Activated CD8-positive, alpha-beta memory T cell treated with anti-CD3 and anti-CD28 coated beads, Interleukin-2, amount 10 ng/mL, durations not matched to agents 7 days and 5 days (primary cell): ENCODE measurements at regions of chr2 and their contacts with region 1.

Region 1: GRCh38 chr2:9984217-9984739 is 32.8 kb downstream of the GRHL1 start:
- DNase-seq: no peak
- ATAC-seq: peak; percentile 78
- H3K4me3 Mint-ChIP-seq: no peak overlapping the region
- H3K27ac Mint-ChIP-seq: no peak overlapping the region
- H3K4me1 Mint-ChIP-seq: peaks cover 13% of the 10 kb centered on the region
- H3K27me3 Mint-ChIP-seq: peaks cover 28% of the 10 kb centered on the region

Region 2: DNA sequence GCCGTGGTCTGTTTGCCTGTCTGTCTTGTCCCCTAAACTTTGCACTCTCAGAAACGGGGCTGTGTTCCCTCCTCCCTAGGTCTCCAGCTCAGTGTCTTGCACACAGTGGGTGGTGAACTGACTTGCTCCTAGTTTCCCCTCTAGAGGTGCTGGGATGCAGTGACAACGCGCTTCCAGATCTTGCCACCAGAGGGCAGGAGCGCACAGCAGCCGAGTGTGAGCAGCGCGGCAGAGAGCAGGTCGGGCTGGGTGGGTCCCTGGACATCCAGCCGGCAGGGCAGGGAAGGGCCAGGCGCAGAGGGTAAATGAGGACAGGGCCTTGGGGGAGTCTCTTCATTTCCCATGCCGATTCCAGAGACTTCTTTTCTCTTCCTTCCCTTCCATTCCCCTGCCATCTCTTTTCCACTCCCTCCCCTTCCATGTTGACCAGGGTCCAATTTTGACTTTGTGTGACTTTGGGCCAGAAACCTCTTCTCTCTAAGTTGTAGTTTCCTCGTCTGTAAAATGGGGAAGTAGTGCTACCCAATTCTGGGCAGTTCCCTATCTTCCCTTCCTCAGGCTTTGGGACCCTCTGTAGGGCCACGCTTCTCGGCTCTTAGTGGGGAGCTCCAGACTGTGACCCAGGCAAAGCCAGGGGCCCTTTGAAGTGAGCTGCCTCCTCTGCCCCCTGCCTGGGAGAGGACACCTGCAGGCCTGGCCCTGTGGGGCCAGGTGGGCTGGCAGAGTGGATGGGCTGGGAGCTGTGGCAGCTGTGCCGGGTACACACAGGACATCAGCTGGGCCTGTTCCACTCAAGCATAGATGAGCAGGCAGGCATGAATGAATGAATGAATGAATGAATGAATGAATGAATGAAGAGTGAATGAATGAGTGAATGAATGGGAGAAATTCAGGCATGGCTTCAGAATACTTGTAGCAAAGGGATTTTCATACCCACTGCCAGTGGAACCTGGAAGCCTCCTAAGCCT is 184.3 kb before region 1 on chr2:
- CTCF ChIA-PET with region 1: interaction called, 32 read pairs
- DNase-seq: peak; percentile 93
- ATAC-seq: peak; percentile 92
- H3K4me3 Mint-ChIP-seq: peak overlapping the region; percentile 57
- H3K27ac Mint-ChIP-seq: peak overlapping the region; percentile 91
- H3K4me1 Mint-ChIP-seq: peaks cover 44% of the 10 kb centered on the region
- H3K27me3 Mint-ChIP-seq: peaks cover 8% of the 10 kb centered on the region

Region 3: DNA sequence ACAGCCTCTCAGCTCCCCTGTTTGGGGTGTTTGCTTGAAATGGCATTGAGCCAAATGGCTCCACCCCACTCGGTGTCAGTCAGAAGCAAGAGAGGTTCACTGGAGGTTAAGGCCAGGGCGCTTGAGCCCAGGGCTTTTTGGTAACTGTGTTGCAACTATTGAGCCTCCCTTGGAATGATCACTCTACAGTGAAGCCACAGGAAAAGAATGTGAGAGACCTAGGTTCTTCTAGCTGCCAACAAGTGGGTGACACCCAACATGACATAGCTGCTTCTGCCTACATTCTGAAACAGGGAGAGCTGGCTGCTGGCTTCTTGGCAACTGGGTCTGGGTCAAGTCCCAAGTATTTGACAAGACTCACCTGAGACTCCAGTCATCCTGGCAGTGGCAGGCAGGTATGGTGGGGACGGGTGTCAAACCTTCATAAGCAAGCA is 39.9 kb before region 1 on chr2:
- CTCF ChIA-PET with region 1: interaction called, 13 read pairs
- DNase-seq: no peak
- ATAC-seq: no peak
- H3K4me3 Mint-ChIP-seq: no peak overlapping the region
- H3K27ac Mint-ChIP-seq: no peak overlapping the region
- H3K4me1 Mint-ChIP-seq: no peaks in the 10 kb centered on the region
- H3K27me3 Mint-ChIP-seq: peaks cover 49% of the 10 kb centered on the region

Region 4: GRCh38 chr2:10019174-10019573 is 34.9 kb after region 1 on chr2:
- CTCF ChIA-PET with region 1: interaction called, 48 read pairs
- DNase-seq: no peak
- ATAC-seq: no peak
- H3K4me3 Mint-ChIP-seq: no peak overlapping the region
- H3K27ac Mint-ChIP-seq: no peak overlapping the region
- H3K4me1 Mint-ChIP-seq: no peaks in the 10 kb centered on the region
- H3K27me3 Mint-ChIP-seq: peaks cover 19% of the 10 kb centered on the region

Region 5: GRCh38 chr2:10036095-10036884 is 52.0 kb after region 1 on chr2:
- CTCF ChIA-PET with region 1: interaction called, 48 read pairs
- DNase-seq: no peak
- ATAC-seq: peak; percentile 57
- H3K4me3 Mint-ChIP-seq: no peak overlapping the region
- H3K27ac Mint-ChIP-seq: no peak overlapping the region
- H3K4me1 Mint-ChIP-seq: peaks cover 9% of the 10 kb centered on the region
- H3K27me3 Mint-ChIP-seq: peaks cover 8% of the 10 kb centered on the region

Region 6: DNA sequence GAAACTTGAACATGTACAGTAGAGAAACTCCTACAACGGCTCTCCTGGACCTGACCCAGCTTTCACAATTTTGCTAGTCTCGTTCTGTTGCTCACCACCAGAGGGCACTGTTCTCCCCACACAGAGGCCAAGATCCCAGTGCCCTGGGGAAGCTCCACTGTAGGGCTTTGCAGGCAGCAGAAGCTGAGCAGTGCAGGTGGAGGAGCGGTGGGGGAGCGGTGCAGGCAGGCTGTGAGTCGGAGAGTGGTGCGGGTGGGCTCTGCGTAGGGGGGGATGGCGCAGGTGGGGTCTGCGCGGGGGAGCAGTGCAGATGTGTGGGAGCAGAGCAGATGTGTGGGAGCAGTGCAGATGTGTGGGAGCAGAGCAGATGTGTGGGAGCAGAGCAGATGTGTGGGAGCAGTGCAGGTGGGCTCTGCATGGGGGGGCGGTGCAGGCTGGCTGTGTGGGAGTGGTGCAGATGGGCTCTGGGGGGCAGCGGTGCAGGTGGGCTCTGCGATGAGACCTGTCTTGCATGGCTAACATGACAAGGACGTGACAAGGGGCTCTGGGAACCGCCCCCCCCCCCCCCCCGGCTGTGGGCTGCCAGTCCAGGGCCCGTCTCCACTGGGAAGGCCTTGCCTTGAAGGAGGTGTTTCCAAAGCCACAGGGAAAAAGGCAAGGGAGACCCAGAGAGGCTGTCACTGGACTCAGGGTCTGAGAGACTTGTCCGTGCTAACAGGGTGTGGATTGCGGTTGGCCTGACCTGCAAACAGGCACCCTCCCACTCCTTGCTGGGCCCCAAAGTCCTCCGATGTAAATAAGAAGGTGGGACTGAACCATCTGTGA is 88.6 kb after region 1 on chr2:
- CTCF ChIA-PET with region 1: interaction called, 20 read pairs
- DNase-seq: peak; percentile 86
- ATAC-seq: peak; percentile 95
- H3K4me3 Mint-ChIP-seq: no peak overlapping the region
- H3K27ac Mint-ChIP-seq: no peak overlapping the region
- H3K4me1 Mint-ChIP-seq: peaks cover 16% of the 10 kb centered on the region
- H3K27me3 Mint-ChIP-seq: peaks cover 51% of the 10 kb centered on the region